Caco-2 (cell line): ENCODE measurements at regions of chr10 and their contacts with region 1.

Region 1: DNA sequence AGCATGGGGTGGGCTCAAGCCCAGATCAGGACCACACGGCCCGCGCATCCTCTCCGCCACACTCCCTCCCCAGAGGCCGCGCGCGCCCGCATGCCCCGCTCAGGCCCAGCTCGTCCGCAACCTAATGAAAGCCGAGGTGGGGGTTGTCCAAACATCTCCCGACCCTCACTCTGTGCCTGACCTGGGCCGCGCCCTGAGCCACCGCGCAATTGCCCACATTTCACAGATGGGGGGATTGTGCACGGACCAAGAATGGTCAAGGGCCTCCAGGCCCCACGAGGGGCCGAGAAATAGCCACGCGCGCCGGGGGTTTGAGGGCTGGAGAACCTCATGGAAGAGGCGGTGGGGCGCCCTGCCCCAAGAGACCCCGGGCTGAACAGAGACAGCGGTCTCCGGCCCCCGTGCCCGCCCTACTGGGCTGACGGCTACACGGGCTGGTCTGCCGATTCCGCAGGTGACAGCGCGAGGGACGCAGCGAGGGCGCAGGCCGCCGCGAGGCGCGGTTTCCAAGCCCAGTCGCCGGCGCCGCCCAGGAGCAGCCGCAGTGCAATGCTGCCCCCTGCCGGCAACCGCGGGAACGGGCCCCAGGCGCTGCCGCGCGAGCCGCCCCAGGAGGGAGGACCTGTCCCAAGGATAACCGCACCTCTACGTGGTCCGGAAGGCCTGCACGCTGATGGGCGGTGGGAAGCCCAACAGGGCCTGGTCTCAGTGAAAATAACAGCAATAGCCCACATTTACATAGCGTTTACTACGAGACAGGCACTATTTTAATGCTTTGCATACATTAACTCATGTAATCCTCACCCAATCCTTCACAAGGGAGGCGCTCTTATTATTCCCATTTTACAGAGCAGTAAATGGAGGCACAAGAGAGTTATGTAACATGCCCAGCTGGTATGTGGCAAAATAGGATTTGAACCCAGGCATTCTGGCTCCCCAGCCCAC is 10.5 kb upstream of the GRID1 start:
- DNase-seq: peak; percentile 71 to 94
- H3K4me3 ChIP-seq: no peak overlapping the region
- H3K4me3 Mint-ChIP-seq: no peak overlapping the region
- H3K27ac Mint-ChIP-seq: no peak overlapping the region
- H3K4me1 ChIP-seq: peaks cover 4% of the 10 kb centered on the region; the same call in 1 of the 2 replicates
- H3K4me1 Mint-ChIP-seq: no peaks in the 10 kb centered on the region
- H3K27me3 ChIP-seq: no peaks in the 10 kb centered on the region
- H3K27me3 Mint-ChIP-seq: peaks cover 13% of the 10 kb centered on the region
- CTCF ChIP-seq: peak; percentile 81 to 98

Region 2: DNA sequence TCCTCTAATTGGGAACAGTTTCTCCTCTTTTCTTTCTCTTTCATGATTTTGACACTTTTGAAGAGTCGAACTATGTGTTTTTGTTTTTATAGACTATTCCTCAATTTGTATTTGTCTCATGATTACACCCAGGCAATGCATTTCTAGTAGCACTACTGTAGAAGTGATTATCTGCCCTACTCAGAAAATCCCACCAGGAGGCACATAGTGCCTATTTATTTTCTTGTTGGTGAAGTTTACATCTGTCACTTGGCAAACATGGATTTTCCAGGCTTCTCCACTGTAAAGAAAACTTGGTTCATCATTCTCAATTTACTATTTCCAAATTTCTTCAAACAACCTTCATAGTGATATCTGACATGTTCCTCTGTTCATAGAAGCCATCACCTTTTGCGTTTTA is 1154.8 kb before region 1 on chr10:
- CTCF ChIA-PET with region 1: no interaction called
- POLR2A ChIA-PET with region 1: no interaction called
- intact Hi-C with region 1: loop called (anchors 10 kb)
- DNase-seq: no peak
- H3K4me3 ChIP-seq: no peak overlapping the region
- H3K4me3 Mint-ChIP-seq: no peak overlapping the region
- H3K27ac Mint-ChIP-seq: no peak overlapping the region
- H3K4me1 ChIP-seq: no peaks in the 10 kb centered on the region
- H3K4me1 Mint-ChIP-seq: no peaks in the 10 kb centered on the region
- H3K27me3 ChIP-seq: no peaks in the 10 kb centered on the region
- H3K27me3 Mint-ChIP-seq: peaks cover 18% of the 10 kb centered on the region
- CTCF ChIP-seq: peak in 1 of 2 experiments; percentile 39

Region 3: GRCh38 chr10:85791818-85792532 is 585.1 kb before region 1 on chr10:
- CTCF ChIA-PET with region 1: no interaction called
- POLR2A ChIA-PET with region 1: no interaction called
- intact Hi-C with region 1: loop called (anchors 10 kb)
- DNase-seq: peak in 1 of 2 experiments; percentile 9
- H3K4me3 ChIP-seq: no peak overlapping the region
- H3K4me3 Mint-ChIP-seq: no peak overlapping the region
- H3K27ac Mint-ChIP-seq: no peak overlapping the region
- H3K4me1 ChIP-seq: no peaks in the 10 kb centered on the region
- H3K4me1 Mint-ChIP-seq: no peaks in the 10 kb centered on the region
- H3K27me3 ChIP-seq: no peaks in the 10 kb centered on the region
- H3K27me3 Mint-ChIP-seq: no peaks in the 10 kb centered on the region
- CTCF ChIP-seq: no peak

Region 4: GRCh38 chr10:86100581-86101061 is 276.5 kb before region 1 on chr10:
- CTCF ChIA-PET with region 1: no interaction called
- POLR2A ChIA-PET with region 1: no interaction called
- intact Hi-C with region 1: loop called (anchors 10 kb)
- DNase-seq: peak in 1 of 2 experiments; percentile 50
- H3K4me3 ChIP-seq: no peak overlapping the region
- H3K4me3 Mint-ChIP-seq: no peak overlapping the region
- H3K27ac Mint-ChIP-seq: no peak overlapping the region
- H3K4me1 ChIP-seq: no peaks in the 10 kb centered on the region
- H3K4me1 Mint-ChIP-seq: no peaks in the 10 kb centered on the region
- H3K27me3 ChIP-seq: no peaks in the 10 kb centered on the region
- H3K27me3 Mint-ChIP-seq: no peaks in the 10 kb centered on the region
- CTCF ChIP-seq: peak; percentile 65 to 66

Region 5: GRCh38 chr10:86261941-86262687 is 115.0 kb before region 1 on chr10:
- CTCF ChIA-PET with region 1: no interaction called
- POLR2A ChIA-PET with region 1: no interaction called
- intact Hi-C with region 1: loop called (anchors 1 kb)
- DNase-seq: peak in 1 of 2 experiments; percentile 55
- H3K4me3 ChIP-seq: no peak overlapping the region
- H3K4me3 Mint-ChIP-seq: no peak overlapping the region
- H3K27ac Mint-ChIP-seq: no peak overlapping the region
- H3K4me1 ChIP-seq: no peaks in the 10 kb centered on the region
- H3K4me1 Mint-ChIP-seq: no peaks in the 10 kb centered on the region
- H3K27me3 ChIP-seq: no peaks in the 10 kb centered on the region
- H3K27me3 Mint-ChIP-seq: peaks cover 10% of the 10 kb centered on the region
- CTCF ChIP-seq: peak; percentile 28 to 61